ENCODE measurements at regions of chr14 and their contacts with region 1.

Region 1: DNA sequence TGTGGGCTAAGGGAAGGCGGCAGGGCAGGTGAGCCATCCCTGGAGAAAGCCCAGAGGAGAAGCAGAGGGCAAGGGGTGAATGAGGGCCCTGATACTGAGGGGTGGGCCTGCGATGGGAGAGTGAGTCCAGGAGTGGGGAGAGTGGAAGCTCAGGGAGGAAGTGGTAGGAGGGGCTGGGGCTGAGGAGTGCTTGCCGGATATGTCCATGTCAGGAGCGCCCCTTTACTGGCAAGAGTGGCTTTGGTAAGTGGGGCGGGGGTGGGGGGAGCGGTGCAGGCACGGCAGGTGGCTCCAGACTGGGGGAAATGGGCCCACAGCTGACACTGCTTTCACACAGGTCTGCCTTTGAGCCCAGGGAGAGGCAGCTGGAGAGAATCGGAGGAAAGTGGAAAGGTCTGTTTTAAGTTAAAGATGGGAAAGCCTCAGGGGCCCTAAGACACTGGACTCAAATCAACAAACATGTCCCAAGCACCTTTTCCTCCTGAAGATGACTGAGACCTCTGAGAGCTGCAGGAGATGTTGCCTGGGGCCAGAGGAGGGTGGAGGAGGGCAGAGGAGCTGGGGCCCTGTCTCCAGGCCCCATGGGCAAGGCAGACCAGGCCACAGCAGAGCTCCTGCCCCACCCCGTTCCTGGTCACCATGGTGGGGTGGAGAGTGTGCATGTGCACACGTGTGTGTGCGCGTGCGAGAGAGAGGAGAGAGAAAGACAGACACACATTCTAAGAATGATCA is 86.5 kb upstream of the GPR68 start:
- DNase-seq: no peak
- ATAC-seq: no peak

Region 2: GRCh38 chr14:91349481-91350074 is 18.6 kb after region 1 on chr14:
- intact Hi-C with region 1: loop called (anchors 2 kb)
- DNase-seq: no peak
- ATAC-seq: no peak

Region 3: GRCh38 chr14:91510174-91511042 is 179.4 kb after region 1 on chr14 and contains the start of gene PPP4R3A:
- intact Hi-C with region 1: no loop called
- DNase-seq: peak; percentile 97
- ATAC-seq: peak; percentile 97
- total RNA-seq, gene PPP4R3A: 47.4 TPM